Activated CD4-positive, alpha-beta T cell treated with anti-CD3 and anti-CD28 coated beads for 36 hours (primary cell): ENCODE measurements at regions of chr3 and their contacts with region 1.

Region 1: DNA sequence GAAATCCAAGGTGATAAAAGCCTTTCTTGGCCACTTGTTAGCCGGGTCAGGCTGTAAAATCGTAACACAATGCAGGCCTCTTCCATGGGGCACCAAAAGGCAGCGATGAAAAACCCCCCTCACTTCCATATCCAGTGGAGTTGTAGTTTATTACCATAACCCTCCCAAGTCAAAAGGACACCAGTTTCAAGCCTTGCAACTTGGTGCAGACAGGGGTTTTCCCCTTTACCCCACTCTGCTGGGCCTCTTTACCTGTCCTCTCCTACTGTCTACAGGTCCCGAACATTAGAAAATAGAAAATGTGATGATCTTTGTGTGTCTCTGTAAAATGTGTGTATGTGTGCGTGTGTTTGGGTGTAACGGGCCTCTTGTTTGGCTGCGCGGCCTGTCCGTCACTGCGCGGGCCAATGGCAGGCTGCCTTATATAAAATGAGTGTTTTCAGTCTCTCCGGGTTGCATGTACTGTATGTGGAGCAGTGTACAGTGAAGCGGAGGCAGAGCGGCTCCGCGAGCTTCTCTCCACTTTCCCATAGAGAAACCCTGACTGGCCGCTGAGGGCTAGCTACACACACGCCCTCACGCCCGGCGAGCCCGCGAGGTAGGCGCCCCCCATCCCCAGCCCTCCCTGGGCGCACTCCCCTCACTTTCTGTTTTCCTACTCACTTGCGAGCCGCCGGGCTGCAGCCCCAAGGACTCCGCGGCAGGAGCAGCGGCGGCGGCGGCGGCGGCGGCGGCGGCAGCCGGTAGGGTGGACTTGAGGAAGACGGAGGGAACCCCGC is at the start of gene BBX:
- DNase-seq: peak; percentile 91
- ATAC-seq: peak; percentile 93
- H3K4me3 Mint-ChIP-seq: peak within 1 kb of the TSS; percentile 97
- H3K27ac Mint-ChIP-seq: peak within 1 kb of the TSS; percentile 95
- H3K4me1 Mint-ChIP-seq: peaks cover 25% of the 10 kb centered on the region
- H3K27me3 Mint-ChIP-seq: no peaks in the 10 kb centered on the region
- total RNA-seq, gene BBX: 38.9 to 63.4 TPM

Region 2: DNA sequence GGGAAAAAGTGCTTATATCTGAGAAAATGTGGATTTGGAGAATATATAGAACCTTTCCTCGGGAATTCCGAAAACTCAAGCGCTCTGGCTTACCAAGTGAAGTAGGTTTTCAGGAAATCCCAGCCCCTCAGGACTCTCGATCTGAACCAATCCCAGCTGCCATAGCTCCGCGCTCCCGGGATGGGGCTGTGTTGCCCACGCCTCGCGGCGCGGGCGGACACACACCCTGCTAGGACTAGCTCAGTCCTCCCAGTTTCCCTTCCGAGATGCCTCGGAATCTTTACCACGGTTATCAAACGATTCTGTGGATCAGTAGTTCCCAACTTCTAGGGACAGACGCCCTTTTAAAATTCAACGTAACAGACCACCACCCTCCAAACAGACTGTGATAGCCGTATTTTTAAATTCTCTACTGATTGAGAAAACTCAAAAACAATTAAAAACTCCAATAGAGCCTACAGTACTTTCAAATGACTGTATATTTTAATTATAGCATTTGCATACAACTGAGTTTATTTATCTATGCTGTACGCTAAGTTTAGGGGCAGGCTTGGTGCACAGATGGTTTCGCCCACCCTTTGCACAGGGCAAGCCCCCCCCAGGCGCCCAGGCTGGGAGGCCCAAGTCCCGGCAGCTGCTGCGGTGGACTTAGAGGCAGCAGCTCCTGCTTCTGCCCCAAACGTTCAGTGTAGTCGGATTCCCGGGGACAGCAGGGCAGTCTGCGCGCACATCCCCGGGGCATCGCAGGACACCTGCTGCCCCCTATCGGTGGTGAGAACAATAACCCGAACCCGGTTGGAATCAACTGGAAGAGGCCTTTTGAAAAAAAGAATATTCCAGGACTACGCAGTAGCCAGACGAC is 93.1 kb before region 1 on chr3:
- CTCF ChIA-PET with region 1: interaction called, 3 read pairs
- POLR2A ChIA-PET with region 1: no interaction called
- intact Hi-C with region 1: loop called (anchors 1 to 2 kb)
- DNase-seq: peak; percentile 77
- ATAC-seq: peak; percentile 74
- H3K4me3 Mint-ChIP-seq: peak overlapping the region; percentile 68
- H3K27ac Mint-ChIP-seq: no peak overlapping the region
- H3K4me1 Mint-ChIP-seq: peaks cover 20% of the 10 kb centered on the region
- H3K27me3 Mint-ChIP-seq: peaks cover 3% of the 10 kb centered on the region

Region 3: DNA sequence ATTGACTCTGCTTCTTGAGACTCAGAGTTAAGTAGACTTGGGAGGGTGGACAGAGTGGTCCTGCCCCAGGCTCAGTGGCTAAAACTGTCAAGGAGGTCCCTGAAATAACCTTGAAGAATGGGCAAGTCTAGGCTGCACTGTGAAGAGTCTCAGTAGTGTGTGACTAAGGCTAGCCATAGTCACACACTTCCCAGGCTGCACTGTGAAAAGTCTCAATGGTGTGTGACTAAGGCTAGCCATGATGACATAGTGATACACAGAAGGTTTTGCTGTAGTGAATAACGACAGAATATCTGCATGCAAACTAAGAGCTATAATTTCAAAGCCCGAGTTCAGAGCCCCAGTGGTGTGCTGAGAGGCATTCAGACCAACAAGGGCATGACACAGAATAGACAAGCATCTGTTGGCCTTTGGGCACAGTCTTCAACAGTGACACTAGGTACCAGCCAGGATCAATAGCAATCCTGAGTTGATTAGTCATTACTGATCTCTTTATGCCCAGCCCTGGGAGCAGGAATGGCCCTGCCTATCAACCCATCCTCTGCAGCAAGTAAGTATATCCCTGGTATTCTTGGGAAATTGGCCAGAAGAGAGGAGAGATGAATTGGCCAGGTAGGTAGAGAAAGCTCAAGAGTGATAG is 72.3 kb before region 1 on chr3:
- CTCF ChIA-PET with region 1: no interaction called
- POLR2A ChIA-PET with region 1: no interaction called
- intact Hi-C with region 1: loop called in 1 of 2 experiments (anchors 5 kb)
- DNase-seq: peak; percentile 43
- ATAC-seq: peak; percentile 95
- H3K4me3 Mint-ChIP-seq: no peak overlapping the region
- H3K27ac Mint-ChIP-seq: no peak overlapping the region
- H3K4me1 Mint-ChIP-seq: peaks cover 10% of the 10 kb centered on the region
- H3K27me3 Mint-ChIP-seq: no peaks in the 10 kb centered on the region

Region 4: GRCh38 chr3:107598926-107599771 is 76.5 kb after region 1 on chr3:
- CTCF ChIA-PET with region 1: no interaction called
- POLR2A ChIA-PET with region 1: no interaction called
- intact Hi-C with region 1: loop called (anchors 1 to 5 kb)
- DNase-seq: peak; percentile 68
- ATAC-seq: peak; percentile 88
- H3K4me3 Mint-ChIP-seq: peak overlapping the region; percentile 91
- H3K27ac Mint-ChIP-seq: peak overlapping the region; percentile 99
- H3K4me1 Mint-ChIP-seq: peaks cover 55% of the 10 kb centered on the region
- H3K27me3 Mint-ChIP-seq: no peaks in the 10 kb centered on the region

Region 5: DNA sequence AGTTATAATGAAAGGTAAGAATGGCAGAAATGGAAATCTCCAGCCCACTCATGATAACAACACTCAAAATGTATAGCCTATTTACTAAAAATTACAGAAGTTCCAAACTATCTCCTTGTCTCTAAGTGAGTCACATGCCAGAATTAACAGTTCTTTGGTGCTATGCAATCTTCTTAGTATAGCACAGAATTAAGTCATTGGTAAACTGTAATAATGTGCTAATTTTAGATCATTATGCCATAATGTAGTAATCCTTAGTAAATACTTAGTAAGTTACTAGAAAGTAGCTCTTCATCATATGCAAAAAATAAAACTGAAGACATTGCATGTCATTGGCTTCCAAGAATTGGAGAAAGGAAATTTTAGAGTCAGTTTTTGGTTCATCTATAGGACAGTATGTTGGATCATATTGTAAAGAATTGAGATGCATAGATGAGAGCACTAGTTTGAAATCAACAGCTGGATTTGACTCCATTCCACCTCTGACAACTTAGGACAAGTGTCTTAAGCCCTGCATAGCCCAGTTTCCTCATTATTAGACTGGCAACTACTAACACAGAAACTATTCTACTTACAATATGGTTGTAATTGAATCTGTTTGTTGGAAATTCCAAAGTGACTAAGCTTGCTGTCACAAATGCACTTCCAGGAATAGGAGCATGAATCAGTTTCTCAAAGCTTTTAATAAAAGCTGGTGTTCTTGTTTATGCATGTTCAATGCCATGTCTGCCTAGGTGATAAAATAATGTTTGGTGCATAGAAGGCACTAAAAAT is 608.2 kb after region 1 on chr3:
- CTCF ChIA-PET with region 1: interaction called, 3 read pairs
- POLR2A ChIA-PET with region 1: no interaction called
- intact Hi-C with region 1: loop called in 1 of 2 experiments (anchors 10 kb)
- DNase-seq: no peak
- ATAC-seq: peak; percentile 37
- H3K4me3 Mint-ChIP-seq: peak overlapping the region; percentile 48
- H3K27ac Mint-ChIP-seq: peak overlapping the region; percentile 93
- H3K4me1 Mint-ChIP-seq: peaks cover 86% of the 10 kb centered on the region
- H3K27me3 Mint-ChIP-seq: no peaks in the 10 kb centered on the region